ENCODE measurements at regions of chr21 and their contacts with region 1.

Region 1: GRCh38 chr21:29130270-29130969 is at the start of gene MAP3K7CL:
- DNase-seq: peak; percentile 99
- H3K4me3 ChIP-seq: no peak within 1 kb of the TSS; the same call in none of the 2 replicates
- H3K27ac ChIP-seq: peak within 1 kb of the TSS; percentile 93
- H3K27me3 ChIP-seq: no peaks in the 10 kb centered on the region
- CTCF ChIP-seq: no peak
- polyA plus RNA-seq, gene MAP3K7CL: 11.0 and 11.1 TPM in 2 replicates

Region 2: GRCh38 chr21:28761674-28762356 is 368.6 kb before region 1 on chr21:
- CTCF ChIA-PET with region 1: no interaction called
- POLR2A ChIA-PET with region 1: no interaction called
- DNase-seq: no peak
- H3K4me3 ChIP-seq: no peak overlapping the region
- H3K27ac ChIP-seq: no peak overlapping the region
- H3K27me3 ChIP-seq: no peaks in the 10 kb centered on the region
- CTCF ChIP-seq: no peak

Region 3: DNA sequence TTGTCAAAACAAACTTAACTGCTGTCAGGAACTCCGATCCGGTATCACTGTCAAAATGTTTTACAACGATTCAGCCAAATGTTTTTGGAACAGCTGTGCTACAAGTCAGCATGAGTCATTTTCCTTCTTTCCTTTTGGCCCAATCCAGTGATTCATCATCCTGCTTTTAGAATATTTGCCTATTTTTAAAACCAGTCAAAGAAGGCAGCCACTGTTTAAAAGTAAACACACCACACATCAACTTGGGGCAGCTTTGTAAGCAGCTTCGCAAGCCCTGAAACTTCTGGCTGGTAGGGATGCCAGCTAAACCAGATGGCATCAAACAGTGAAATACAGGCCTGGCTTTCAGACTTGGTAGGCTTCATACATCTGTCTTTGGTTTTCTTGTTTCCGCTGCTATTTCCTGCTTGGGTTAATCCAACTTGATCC is 14.9 kb after region 1 on chr21:
- CTCF ChIA-PET with region 1: interaction called, 4 read pairs
- POLR2A ChIA-PET with region 1: interaction called, 11 read pairs
- DNase-seq: peak; percentile 73
- H3K4me3 ChIP-seq: no peak overlapping the region
- H3K27ac ChIP-seq: peak overlapping the region; percentile 68
- H3K27me3 ChIP-seq: no peaks in the 10 kb centered on the region
- CTCF ChIP-seq: no peak

Region 4: DNA sequence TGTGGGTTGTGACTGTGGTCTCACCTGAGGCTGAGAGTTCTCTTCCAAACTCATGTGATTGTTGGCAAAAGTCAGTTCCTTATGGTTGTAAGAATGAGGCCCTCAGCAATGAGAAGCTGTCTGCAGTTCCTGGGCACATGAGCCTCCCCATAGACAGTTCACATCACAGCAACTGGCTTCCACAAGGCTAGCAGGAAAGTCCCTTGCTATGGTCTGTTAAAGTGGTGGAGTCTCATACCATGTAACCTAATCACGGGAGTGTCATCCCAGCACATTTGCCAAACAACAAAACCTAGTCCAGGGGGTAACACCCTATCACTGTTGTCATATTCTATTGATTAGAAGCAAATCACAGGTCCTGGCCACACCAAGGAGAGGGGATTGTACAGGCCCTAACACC is 332.1 kb after region 1 on chr21:
- CTCF ChIA-PET with region 1: no interaction called
- POLR2A ChIA-PET with region 1: no interaction called
- DNase-seq: no peak
- H3K4me3 ChIP-seq: no peak overlapping the region
- H3K27ac ChIP-seq: no peak overlapping the region
- H3K27me3 ChIP-seq: no peaks in the 10 kb centered on the region
- CTCF ChIP-seq: no peak

Measured in AG04450 (cell line).